Panc1 (cell line): ENCODE measurements at regions of chr12 and their contacts with region 1.

Region 1: GRCh38 chr12:47715393-47715876 is 9.6 kb upstream of the RPAP3 start:
- DNase-seq: no peak
- ATAC-seq: peak; percentile 88
- H3K4me3 ChIP-seq: no peak overlapping the region
- H3K27ac ChIP-seq: no peak overlapping the region
- H3K4me1 ChIP-seq: peaks cover 3% of the 10 kb centered on the region; the same call in 1 of the 2 replicates
- H3K27me3 ChIP-seq: no peaks in the 10 kb centered on the region
- CTCF ChIP-seq: peak; percentile 88

Region 2: DNA sequence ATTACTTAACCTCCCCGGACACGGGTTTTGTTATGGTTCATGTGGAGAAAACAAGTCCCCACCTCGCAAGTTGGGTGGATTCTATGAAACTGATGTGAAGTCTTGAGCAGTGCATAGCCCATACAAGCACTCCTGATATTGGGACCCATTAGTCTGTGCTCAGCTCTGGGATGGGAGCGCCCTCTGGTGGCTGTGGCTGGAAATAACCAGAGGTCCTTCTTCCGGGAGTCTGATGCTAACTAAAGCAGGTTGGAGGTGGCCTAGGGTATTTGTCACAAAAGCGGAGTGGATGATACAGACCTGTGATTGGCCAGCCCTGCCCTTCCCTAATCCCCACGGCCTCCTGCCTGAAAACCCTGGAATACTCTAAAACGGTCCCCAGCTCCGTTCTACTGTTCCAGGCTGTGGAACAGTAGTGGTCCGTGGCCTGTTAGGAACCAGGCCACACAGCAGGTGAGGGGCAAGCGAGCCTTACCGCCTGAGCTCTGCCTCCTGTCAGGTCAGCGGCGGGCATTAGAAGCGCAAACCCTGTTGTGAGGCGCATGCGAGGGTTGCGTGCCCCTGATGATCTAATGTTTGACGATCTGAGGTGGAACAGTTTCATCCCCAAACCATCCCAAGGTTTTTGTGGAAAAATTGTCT is 64.0 kb after region 1 on chr12:
- CTCF ChIA-PET with region 1: interaction called, 3 read pairs
- POLR2A ChIA-PET with region 1: no interaction called
- in situ Hi-C with region 1: no loop called
- intact Hi-C with region 1: loop called (anchors 2 kb)
- DNase-seq: peak; percentile 76
- ATAC-seq: peak; percentile 90
- H3K4me3 ChIP-seq: no peak overlapping the region
- H3K27ac ChIP-seq: no peak overlapping the region
- H3K4me1 ChIP-seq: peaks cover 33% of the 10 kb centered on the region
- H3K27me3 ChIP-seq: no peaks in the 10 kb centered on the region
- CTCF ChIP-seq: peak; percentile 97